Activated CD4-positive, alpha-beta memory T cell treated with anti-CD3 and anti-CD28 coated beads for 36 hours (primary cell): ENCODE measurements at regions of chr5 and their contacts with region 1.

Region 1: DNA sequence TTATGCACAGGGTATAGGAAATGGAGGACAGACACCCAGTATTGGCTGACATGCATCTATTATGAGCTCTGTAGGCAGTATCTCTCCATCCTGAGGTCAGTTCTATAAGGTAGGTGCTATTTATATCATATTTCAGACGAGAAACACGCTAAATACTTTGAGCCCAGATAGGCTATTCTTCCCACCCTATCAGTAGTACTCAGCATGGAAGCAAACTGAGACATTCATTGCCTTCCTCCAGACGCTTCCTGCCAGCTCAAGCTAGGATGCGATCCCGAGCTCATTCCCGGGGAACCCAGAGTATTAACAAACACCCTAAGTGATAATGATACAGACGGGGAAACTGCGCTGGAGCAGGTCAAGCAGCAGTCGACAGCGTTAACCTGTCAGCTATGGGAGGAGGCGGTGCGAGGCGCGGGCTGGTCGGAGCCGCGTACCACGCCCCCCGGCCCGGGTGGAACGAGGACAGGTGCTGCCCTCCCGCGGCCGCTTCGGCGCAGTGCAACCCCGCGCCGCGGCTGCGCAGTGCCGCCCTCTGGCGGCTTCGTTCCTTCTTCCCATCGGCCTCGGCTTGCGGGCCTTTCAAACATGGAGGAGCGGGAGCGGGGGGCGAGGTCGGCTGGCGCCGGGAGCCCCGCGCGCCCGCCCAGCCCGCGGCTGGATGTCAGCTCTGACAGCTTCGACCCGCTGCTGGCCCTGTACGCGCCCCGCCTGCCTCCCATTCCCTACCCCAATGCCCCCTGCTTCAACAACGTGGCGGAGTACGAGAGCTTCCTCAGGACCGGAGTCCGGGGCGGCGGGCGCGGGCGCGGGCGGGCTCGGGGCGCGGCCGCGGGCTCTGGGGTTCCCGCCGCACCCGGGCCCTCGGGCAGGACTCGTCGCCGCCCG is at the start of gene LSM11:
- DNase-seq: peak; percentile 94
- H3K4me3 Mint-ChIP-seq: peak within 1 kb of the TSS; percentile 87
- H3K27ac Mint-ChIP-seq: peak within 1 kb of the TSS; percentile 55
- H3K4me1 Mint-ChIP-seq: peaks cover 43% of the 10 kb centered on the region
- H3K27me3 Mint-ChIP-seq: no peaks in the 10 kb centered on the region
- total RNA-seq, gene LSM11: 7.4 to 8.0 TPM

Region 2: DNA sequence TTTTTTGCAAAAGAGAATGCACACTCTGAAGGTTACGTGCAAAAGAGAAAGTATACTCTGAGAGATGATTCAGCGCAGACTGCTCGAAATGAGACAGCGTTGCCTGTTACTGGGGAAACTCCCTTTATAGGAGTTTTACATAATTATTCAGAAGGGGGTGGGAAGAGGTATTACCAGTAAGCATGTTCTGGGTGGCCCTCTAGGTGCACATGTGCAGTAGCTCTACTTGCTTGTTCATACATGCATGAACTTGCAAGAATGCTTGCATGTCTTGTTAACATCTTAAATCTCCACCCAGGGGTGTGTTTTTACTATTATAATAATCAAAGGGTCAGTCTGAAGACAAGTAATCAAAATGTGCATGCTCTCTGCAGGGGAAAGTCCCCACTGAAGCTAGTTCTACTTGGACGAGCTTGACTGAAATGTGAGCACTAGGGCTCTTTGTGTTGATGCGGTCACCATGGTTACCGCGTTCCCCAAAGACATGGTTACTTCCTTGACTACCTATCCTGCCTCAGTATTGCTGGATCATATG is 1341.0 kb before region 1 on chr5:
- CTCF ChIA-PET with region 1: no interaction called
- POLR2A ChIA-PET with region 1: no interaction called
- intact Hi-C with region 1: no loop called
- DNase-seq: peak; percentile 84
- H3K4me3 Mint-ChIP-seq: peak overlapping the region; percentile 13
- H3K27ac Mint-ChIP-seq: peak overlapping the region; percentile 21
- H3K4me1 Mint-ChIP-seq: peaks cover 16% of the 10 kb centered on the region
- H3K27me3 Mint-ChIP-seq: peaks cover 6% of the 10 kb centered on the region

Region 3: GRCh38 chr5:157328277-157328912 is 415.0 kb before region 1 on chr5:
- CTCF ChIA-PET with region 1: interaction called, 30 read pairs
- POLR2A ChIA-PET with region 1: no interaction called
- intact Hi-C with region 1: loop called (anchors 1 kb)
- DNase-seq: peak; percentile 71
- H3K4me3 Mint-ChIP-seq: no peak overlapping the region
- H3K27ac Mint-ChIP-seq: peak overlapping the region; percentile 23
- H3K4me1 Mint-ChIP-seq: peaks cover 40% of the 10 kb centered on the region
- H3K27me3 Mint-ChIP-seq: no peaks in the 10 kb centered on the region

Region 4: DNA sequence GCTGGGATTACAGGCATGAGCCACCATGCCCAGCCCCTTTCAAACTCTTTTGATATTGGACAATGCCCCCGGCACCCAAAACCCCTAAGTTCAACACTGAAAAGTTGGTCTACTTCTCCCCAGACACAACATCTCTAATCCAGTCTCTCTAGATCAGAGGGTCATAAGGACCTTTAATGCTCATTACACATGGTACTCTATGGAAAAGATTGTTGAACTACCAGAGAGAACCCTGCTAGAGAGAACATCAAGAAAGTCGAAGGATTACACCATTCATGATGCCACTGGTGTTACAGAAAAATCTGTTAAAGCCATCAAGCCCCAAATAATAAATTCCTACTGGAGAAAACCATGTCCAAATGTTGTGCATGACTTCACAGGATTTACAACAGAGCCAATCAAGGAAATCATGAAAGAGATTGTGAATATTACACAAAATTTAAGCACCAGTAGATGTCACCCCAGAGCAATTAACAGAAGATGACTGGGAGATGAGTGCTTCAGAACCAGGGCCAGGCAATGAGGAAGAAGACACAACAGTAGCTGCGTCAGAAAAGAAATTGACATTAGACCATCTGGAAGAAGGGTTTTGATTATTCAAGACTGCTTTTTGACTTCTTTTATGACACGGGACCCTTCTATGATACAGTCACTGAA is 311.7 kb before region 1 on chr5:
- CTCF ChIA-PET with region 1: interaction called, 43 read pairs
- POLR2A ChIA-PET with region 1: no interaction called
- intact Hi-C with region 1: loop called (anchors 1 kb)
- DNase-seq: peak; percentile 30
- H3K4me3 Mint-ChIP-seq: no peak overlapping the region
- H3K27ac Mint-ChIP-seq: no peak overlapping the region
- H3K4me1 Mint-ChIP-seq: peaks cover 8% of the 10 kb centered on the region
- H3K27me3 Mint-ChIP-seq: peaks cover 1% of the 10 kb centered on the region

Region 5: DNA sequence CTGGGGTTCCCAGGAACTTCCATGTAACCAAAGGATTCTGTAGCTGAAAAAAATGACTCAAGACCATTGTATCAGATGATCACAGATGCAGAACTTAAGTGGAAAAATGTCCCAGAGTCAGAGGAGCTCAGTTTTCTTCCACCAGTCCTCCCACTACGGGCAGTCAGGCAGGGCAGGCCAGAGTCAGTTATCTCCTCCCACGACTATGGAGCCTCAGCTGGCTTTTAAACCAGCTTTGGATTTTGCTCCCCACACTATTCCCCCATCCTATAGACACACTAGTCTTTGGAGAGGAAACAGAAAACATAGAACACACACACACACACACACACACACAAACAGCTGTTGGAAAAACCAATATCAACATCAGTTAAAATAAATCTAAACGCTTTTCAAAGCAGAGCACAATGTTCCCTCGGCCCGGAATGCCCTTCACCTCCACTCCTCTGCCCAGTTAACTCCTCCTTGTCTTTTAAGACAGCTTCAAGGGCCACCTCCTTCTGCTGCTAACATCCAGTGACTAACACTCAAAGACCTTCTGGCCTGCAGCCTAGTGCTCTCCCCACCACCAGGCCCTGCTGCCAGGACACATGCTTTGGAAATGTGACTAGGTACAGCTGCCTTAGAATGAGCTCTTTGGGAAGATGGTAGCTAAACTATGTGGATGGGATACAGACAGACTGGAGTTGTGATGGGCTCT is 226.6 kb before region 1 on chr5:
- CTCF ChIA-PET with region 1: interaction called, 10 read pairs
- POLR2A ChIA-PET with region 1: no interaction called
- intact Hi-C with region 1: no loop called
- DNase-seq: no peak
- H3K4me3 Mint-ChIP-seq: peak overlapping the region; percentile 7
- H3K27ac Mint-ChIP-seq: peak overlapping the region; percentile 55
- H3K4me1 Mint-ChIP-seq: peaks cover 39% of the 10 kb centered on the region
- H3K27me3 Mint-ChIP-seq: no peaks in the 10 kb centered on the region

Region 6: GRCh38 chr5:157603333-157604190 is 139.8 kb before region 1 on chr5:
- CTCF ChIA-PET with region 1: interaction called, 9 read pairs
- POLR2A ChIA-PET with region 1: no interaction called
- intact Hi-C with region 1: loop called (anchors 1 kb)
- DNase-seq: peak; percentile 83
- H3K4me3 Mint-ChIP-seq: peak overlapping the region; percentile 18
- H3K27ac Mint-ChIP-seq: peak overlapping the region; percentile 90
- H3K4me1 Mint-ChIP-seq: peaks cover 93% of the 10 kb centered on the region
- H3K27me3 Mint-ChIP-seq: no peaks in the 10 kb centered on the region

Region 7: GRCh38 chr5:157718519-157718918 is 24.9 kb before region 1 on chr5:
- CTCF ChIA-PET with region 1: interaction called, 14 read pairs
- POLR2A ChIA-PET with region 1: no interaction called
- intact Hi-C with region 1: no loop called
- DNase-seq: no peak
- H3K4me3 Mint-ChIP-seq: no peak overlapping the region
- H3K27ac Mint-ChIP-seq: no peak overlapping the region
- H3K4me1 Mint-ChIP-seq: peaks cover 21% of the 10 kb centered on the region
- H3K27me3 Mint-ChIP-seq: no peaks in the 10 kb centered on the region